PC-3 (cell line): ENCODE measurements at regions of chr4 and their contacts with region 1.

Region 1: DNA sequence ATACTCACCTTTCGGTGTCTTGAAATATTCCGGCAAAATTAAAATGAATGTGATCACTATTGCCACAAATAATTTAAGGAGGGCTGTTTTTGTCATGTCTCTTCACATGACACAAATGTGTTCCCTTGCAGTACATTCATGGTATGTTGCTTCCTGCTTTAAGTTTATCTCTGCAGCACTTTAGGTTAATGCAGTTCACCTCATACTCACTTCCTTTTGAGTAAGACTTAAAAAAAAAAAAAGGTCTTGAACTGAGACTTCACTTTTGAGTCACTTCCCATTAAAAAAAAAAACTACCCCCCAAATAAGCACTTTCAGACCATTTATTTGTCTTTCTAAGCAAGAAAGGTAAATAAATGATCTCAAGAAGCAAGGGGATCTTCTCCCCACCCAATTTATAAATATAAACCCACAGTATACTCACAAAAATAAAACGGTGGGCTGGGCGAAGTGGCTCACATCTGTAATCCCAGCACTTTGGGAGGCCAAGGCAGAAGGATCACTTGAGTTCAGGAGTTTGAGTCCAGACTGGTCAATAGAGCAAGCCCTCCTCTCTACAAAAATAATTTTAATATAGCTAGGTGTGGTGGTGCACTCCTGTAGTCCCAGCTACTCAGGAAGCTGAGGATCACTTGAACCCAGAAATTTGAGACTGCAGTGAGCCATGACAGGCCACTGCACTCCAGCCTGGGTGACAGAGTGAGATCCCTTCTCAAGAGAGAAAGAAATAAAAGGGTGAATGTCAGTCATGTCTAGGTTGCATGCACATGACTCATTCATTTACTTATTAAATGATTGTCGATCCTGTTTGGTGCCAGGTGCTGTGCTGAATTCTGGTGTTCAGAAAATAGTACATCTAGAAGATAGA is at the start of gene TMEM156:
- DNase-seq: peak; percentile 83
- ATAC-seq: peak; percentile 53
- H3K4me3 ChIP-seq: peak within 1 kb of the TSS; percentile 89
- H3K27ac ChIP-seq: peak within 1 kb of the TSS; percentile 100
- H3K4me1 ChIP-seq: peaks cover 57% of the 10 kb centered on the region
- H3K27me3 ChIP-seq: no peaks in the 10 kb centered on the region
- CTCF ChIP-seq: no peak
- total RNA-seq, gene TMEM156: 32.1 and 41.5 TPM in 2 replicates

Region 2: GRCh38 chr4:39044364-39044955 is 12.0 kb after region 1 on chr4:
- CTCF ChIA-PET with region 1: no interaction called
- POLR2A ChIA-PET with region 1: interaction called, 17 read pairs
- intact Hi-C with region 1: loop called (anchors 1 kb)
- DNase-seq: peak; percentile 84
- ATAC-seq: peak; percentile 64
- H3K4me3 ChIP-seq: peak overlapping the region; percentile 88
- H3K27ac ChIP-seq: peak overlapping the region; percentile 95
- H3K4me1 ChIP-seq: peaks cover 48% of the 10 kb centered on the region
- H3K27me3 ChIP-seq: no peaks in the 10 kb centered on the region
- CTCF ChIP-seq: no peak

Region 3: GRCh38 chr4:39054497-39054896 is 22.0 kb after region 1 on chr4:
- CTCF ChIA-PET with region 1: no interaction called
- POLR2A ChIA-PET with region 1: no interaction called
- intact Hi-C with region 1: no loop called
- DNase-seq: no peak
- ATAC-seq: no peak
- H3K4me3 ChIP-seq: no peak overlapping the region
- H3K27ac ChIP-seq: no peak overlapping the region
- H3K4me1 ChIP-seq: no peaks in the 10 kb centered on the region
- H3K27me3 ChIP-seq: no peaks in the 10 kb centered on the region
- CTCF ChIP-seq: no peak

Region 4: DNA sequence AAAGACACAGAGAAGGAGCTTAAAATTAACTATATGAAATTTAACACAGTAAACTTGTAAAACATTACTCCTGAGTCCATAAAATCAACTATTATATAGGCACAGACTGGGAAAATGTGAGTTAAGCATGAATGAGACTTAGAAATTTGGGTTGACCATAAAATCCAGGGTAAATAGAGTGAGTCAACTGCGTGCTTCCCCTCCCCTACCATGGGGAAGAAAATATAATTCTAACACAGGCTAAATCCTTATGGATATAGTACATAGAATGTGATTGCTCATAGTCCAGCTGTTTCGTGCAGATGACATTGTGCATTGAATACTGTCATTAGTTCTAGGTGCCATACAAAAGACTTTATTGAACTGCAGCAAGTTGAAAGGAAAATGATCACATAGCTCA is 71.8 kb after region 1 on chr4:
- CTCF ChIA-PET with region 1: no interaction called
- POLR2A ChIA-PET with region 1: no interaction called
- intact Hi-C with region 1: loop called (anchors 1 kb)
- DNase-seq: peak; percentile 77
- ATAC-seq: peak; percentile 92
- H3K4me3 ChIP-seq: no peak overlapping the region
- H3K27ac ChIP-seq: peak overlapping the region; percentile 73
- H3K4me1 ChIP-seq: peaks cover 16% of the 10 kb centered on the region
- H3K27me3 ChIP-seq: no peaks in the 10 kb centered on the region
- CTCF ChIP-seq: no peak

Region 5: GRCh38 chr4:39124885-39125599 is 92.6 kb after region 1 on chr4:
- CTCF ChIA-PET with region 1: no interaction called
- POLR2A ChIA-PET with region 1: no interaction called
- intact Hi-C with region 1: no loop called
- DNase-seq: no peak
- ATAC-seq: no peak
- H3K4me3 ChIP-seq: no peak overlapping the region
- H3K27ac ChIP-seq: no peak overlapping the region
- H3K4me1 ChIP-seq: no peaks in the 10 kb centered on the region
- H3K27me3 ChIP-seq: no peaks in the 10 kb centered on the region
- CTCF ChIP-seq: no peak

Region 6: GRCh38 chr4:39181905-39182638 is 149.6 kb after region 1 on chr4 and contains the start of gene WDR19:
- CTCF ChIA-PET with region 1: no interaction called
- POLR2A ChIA-PET with region 1: no interaction called
- intact Hi-C with region 1: loop called (anchors 5 kb)
- DNase-seq: peak; percentile 98
- ATAC-seq: peak; percentile 97
- H3K4me3 ChIP-seq: peak within 1 kb of the TSS; percentile 97
- H3K27ac ChIP-seq: no peak within 1 kb of the TSS
- H3K4me1 ChIP-seq: peaks cover 9% of the 10 kb centered on the region; the same call in 1 of the 2 replicates
- H3K27me3 ChIP-seq: no peaks in the 10 kb centered on the region
- CTCF ChIP-seq: peak; percentile 54
- total RNA-seq, gene WDR19: 11.0 and 16.7 TPM in 2 replicates